ENCODE measurements at regions of chr9 and their contacts with region 1.

Region 1: DNA sequence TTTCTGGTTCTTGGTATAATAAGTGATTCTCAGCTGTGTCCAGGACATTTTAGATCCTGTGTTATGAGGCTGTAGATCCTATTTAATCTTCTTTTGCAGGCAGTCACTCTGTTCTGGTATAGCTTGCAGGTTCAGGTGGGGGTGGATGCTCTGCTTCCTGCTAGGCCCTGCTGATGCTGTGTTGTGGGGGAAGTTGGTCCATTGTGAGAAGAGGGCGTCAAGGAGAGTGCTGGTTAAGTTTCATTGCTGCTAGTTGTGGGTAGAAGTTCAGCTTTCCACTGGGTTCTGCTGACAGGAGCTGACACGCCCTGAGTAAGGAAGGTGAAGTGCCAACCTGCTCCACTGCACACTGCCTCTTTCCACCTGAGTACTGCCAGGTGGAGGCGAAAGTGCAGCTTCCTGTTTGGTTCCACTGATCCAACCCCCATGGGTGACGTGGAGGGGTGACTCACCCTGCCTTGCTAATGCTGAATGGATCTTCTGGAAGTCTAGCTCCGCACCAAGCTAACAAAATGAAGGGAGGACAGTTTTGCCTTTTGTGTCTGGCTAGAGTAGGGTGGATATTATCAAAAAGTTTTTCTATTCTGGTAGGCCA is 16.3 kb downstream of the NMRK1 start:
- DNase-seq: peak; percentile 91
- H3K4me3 ChIP-seq: peak overlapping the region in 1 of 4 donors; percentile 11
- H3K27ac ChIP-seq: peak overlapping the region; percentile 65 to 86 (median 74)
- H3K4me1 ChIP-seq: peaks cover 0 to 6% (median 2%) of the 10 kb centered on the region in 4 donors
- H3K27me3 ChIP-seq: no peaks in the 10 kb centered on the region
- CTCF ChIP-seq: peak in 1 of 5 experiments; percentile 46
- EP300 ChIP-seq: no peak
- POLR2A ChIP-seq: peak; percentile 28

Region 2: DNA sequence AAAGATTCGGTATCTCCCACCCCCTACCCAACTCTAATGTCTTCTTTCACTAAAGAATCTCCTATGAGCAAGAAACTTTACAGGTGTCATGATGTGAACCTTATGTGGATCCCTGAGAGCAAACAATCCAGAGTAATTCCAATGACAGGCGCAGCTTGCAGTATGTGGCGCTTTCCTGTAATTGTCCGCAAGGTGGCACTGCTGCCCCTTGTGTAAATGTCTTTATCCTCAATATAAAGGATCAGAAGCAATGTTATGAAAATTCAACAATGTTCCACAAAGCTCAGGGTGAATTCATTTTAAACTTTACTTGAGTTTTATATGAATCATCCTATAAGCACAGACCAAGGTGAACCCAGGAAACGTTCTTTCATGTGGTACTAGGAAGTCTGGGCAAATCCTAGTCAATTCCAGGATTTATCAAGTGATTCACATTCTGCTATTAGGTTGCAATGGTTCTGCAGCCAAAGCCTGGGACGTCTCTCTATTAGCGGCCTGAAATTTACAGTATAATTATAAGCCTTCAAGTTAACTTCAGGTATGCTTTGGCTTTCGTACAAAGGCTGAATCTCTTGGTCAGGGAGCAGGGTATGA is 297.6 kb before region 1 on chr9:
- in situ Hi-C with region 1: loop called (anchors 5 to 10 kb)
- intact Hi-C with region 1: loop called (anchors 5 kb)
- DNase-seq: peak; percentile 87
- H3K4me3 ChIP-seq: no peak overlapping the region
- H3K27ac ChIP-seq: no peak overlapping the region
- H3K4me1 ChIP-seq: peaks cover 0 to 8% (median 0%) of the 10 kb centered on the region in 4 donors
- H3K27me3 ChIP-seq: no peaks in the 10 kb centered on the region
- CTCF ChIP-seq: peak; percentile 86 to 90 (median 87)
- EP300 ChIP-seq: no peak
- POLR2A ChIP-seq: no peak

Region 3: DNA sequence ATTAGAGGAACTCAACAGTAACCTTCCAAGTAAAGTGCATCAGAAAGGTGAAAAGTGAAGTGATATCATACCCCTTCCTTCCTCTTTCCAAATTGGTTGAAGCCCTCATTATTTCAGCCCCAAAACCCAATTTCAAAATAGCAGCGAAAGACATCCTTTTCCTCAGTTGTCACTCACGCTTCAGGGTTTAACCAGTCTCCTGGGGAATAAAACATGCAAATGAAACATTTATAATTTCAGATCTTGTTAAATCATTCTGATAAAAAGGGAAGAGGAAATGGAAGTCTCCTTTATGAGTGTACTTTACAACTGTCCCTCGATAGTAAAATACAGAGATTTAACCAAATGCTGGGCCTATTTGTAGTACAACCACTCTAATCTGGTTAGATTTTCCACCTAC is 206.4 kb before region 1 on chr9:
- in situ Hi-C with region 1: no loop called
- intact Hi-C with region 1: no loop called
- DNase-seq: no peak
- H3K4me3 ChIP-seq: no peak overlapping the region
- H3K27ac ChIP-seq: peak overlapping the region in 2 of 4 donors; percentile 14 to 24
- H3K4me1 ChIP-seq: peaks cover 0 to 49% (median 9%) of the 10 kb centered on the region in 4 donors
- H3K27me3 ChIP-seq: no peaks in the 10 kb centered on the region
- CTCF ChIP-seq: no peak
- EP300 ChIP-seq: no peak
- POLR2A ChIP-seq: no peak

Region 4: DNA sequence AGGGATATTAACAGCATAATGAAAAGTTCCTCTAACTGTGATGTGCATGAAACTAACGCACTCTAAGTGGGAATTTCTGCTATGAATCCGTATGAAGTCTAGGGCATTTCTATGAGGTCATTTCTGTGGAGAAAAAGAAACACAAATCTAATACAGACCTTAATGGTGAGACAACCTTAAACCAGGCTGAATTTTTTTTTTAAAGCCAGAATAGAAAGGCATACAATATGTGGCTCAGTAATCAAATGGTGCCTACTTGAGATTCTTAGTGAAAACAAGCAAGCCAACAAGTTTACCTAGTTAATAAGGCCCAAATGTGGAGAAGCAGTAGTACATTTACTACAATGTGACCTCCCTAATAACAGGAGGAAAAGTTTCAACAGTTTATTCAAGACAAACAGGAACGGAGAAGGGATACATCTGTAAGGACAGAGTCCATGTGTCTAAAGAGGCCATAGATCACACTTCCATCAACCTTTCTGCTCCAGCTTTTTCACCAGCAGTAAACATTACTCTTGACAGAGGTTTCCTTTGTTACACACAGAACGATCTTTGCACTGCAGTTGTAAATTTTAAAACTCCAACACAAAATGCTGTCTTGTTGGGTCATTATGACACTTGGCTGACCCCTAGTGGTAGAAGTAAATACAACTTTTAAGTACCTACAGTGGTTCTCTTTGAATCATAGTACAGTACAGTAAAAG is 69.8 kb before region 1 on chr9:
- in situ Hi-C with region 1: loop called in 1 of 4 experiments (anchors 10 kb)
- intact Hi-C with region 1: no loop called
- DNase-seq: no peak
- H3K4me3 ChIP-seq: no peak overlapping the region
- H3K27ac ChIP-seq: peak overlapping the region; percentile 56 to 72 (median 68)
- H3K4me1 ChIP-seq: peaks cover 0 to 21% (median 8%) of the 10 kb centered on the region in 4 donors
- H3K27me3 ChIP-seq: no peaks in the 10 kb centered on the region
- CTCF ChIP-seq: peak; percentile 72 to 92 (median 77)
- EP300 ChIP-seq: no peak
- POLR2A ChIP-seq: no peak

Region 5: GRCh38 chr9:75027187-75028107 is 44.2 kb before region 1 on chr9:
- in situ Hi-C with region 1: loop called in 1 of 4 experiments (anchors 10 kb)
- intact Hi-C with region 1: no loop called
- DNase-seq: peak; percentile 79
- H3K4me3 ChIP-seq: peak overlapping the region; percentile 67 to 94 (median 78)
- H3K27ac ChIP-seq: peak overlapping the region; percentile 94 to 100 (median 97)
- H3K4me1 ChIP-seq: peaks cover 3 to 30% (median 22%) of the 10 kb centered on the region in 4 donors
- H3K27me3 ChIP-seq: no peaks in the 10 kb centered on the region
- CTCF ChIP-seq: peak in 1 of 5 experiments; percentile 29
- EP300 ChIP-seq: no peak
- POLR2A ChIP-seq: no peak

Region 6: GRCh38 chr9:75039009-75039408 is 32.6 kb before region 1 on chr9:
- in situ Hi-C with region 1: no loop called
- intact Hi-C with region 1: no loop called
- DNase-seq: no peak
- H3K4me3 ChIP-seq: no peak overlapping the region
- H3K27ac ChIP-seq: peak overlapping the region in 1 of 4 donors; percentile 40
- H3K4me1 ChIP-seq: no peaks in the 10 kb centered on the region
- H3K27me3 ChIP-seq: no peaks in the 10 kb centered on the region
- CTCF ChIP-seq: no peak
- EP300 ChIP-seq: no peak
- POLR2A ChIP-seq: no peak

Region 7: DNA sequence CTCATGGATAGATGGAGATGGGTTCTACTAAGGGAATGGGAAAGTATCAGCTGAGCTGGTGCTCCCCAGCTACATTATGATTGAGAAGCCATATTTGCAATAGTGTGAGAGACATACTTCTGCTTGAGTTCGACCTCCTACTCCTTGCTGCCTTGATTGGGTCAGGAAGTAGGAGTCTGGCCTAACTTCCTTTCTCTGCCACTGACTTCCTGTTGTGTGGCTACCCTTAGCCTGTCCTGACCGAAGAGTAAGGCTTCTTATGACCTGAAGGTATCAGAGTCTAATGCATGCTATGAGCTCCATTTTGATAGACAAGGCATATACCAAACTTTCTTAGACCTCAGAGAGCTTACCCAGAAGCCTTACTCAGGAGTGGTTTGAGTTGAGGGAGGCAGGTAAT is 70.6 kb after region 1 on chr9:
- in situ Hi-C with region 1: no loop called
- intact Hi-C with region 1: no loop called
- DNase-seq: no peak
- H3K4me3 ChIP-seq: no peak overlapping the region
- H3K27ac ChIP-seq: no peak overlapping the region
- H3K4me1 ChIP-seq: no peaks in the 10 kb centered on the region
- H3K27me3 ChIP-seq: no peaks in the 10 kb centered on the region
- CTCF ChIP-seq: no peak
- EP300 ChIP-seq: no peak
- POLR2A ChIP-seq: no peak